ENCODE measurements at regions of chr2 and their contacts with region 1.

Region 1: GRCh38 chr2:160252278-160252887 is 52.3 kb upstream of the ITGB6 start:
- DNase-seq: peak; percentile 56 to 62
- ATAC-seq: peak; percentile 38 to 54; a peak in 3 of 6 replicates
- H3K4me3 ChIP-seq: peak overlapping the region; percentile 34; the same call in 1 of the 3 replicates
- H3K27ac ChIP-seq: peak overlapping the region; percentile 73 to 84
- H3K4me1 ChIP-seq: peaks cover 50% of the 10 kb centered on the region
- CTCF ChIP-seq: peak; percentile 78
- EP300 ChIP-seq: no peak
- POLR2A ChIP-seq: no peak
- RAD21 ChIP-seq: peak; percentile 66 to 71; a peak in 4 of 5 replicates

Region 2: GRCh38 chr2:160224060-160224459 is 28.3 kb before region 1 on chr2:
- CTCF ChIA-PET with region 1: interaction called, 15 read pairs
- POLR2A ChIA-PET with region 1: interaction called, 3 read pairs
- DNase-seq: peak; percentile 86 to 92
- ATAC-seq: peak; percentile 64 to 73
- H3K4me3 ChIP-seq: no peak overlapping the region
- H3K27ac ChIP-seq: peak overlapping the region; percentile 88 to 97
- H3K4me1 ChIP-seq: peaks cover 95% of the 10 kb centered on the region
- CTCF ChIP-seq: no peak
- EP300 ChIP-seq: peak; percentile 21 to 59; a peak in 2 of 5 replicates
- POLR2A ChIP-seq: no peak
- RAD21 ChIP-seq: peak; percentile 2 to 20; a peak in 2 of 5 replicates

Region 3: DNA sequence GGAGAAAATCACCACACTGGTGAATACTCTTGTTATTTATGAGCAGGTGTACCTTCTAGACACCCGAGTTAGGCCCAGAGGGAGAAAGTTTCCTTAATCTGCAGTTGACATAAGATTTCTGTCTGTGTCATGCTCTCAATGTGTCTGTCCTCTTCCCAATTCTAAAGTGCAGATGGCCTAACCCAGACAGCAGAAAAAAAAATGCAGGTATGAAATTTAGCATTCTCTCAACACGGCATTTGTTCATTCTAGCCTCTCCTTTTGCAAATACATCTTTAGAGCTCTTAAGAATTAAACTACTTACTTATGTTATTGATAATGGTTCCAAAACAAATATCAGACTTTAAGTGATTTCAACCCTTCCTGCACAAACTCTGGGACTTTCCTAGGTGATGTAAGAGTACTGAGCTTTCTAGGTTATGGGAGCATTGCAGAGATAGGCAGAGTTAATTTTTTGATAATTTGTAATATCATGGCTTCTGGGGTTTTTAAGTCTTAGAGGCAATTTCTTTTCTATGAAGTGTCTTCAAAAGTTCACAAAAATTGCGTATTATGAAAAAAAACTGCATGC is 19.4 kb before region 1 on chr2:
- CTCF ChIA-PET with region 1: interaction called, 15 read pairs
- POLR2A ChIA-PET with region 1: interaction called, 3 read pairs
- DNase-seq: no peak
- ATAC-seq: no peak; a peak in 1 of 6 replicates
- H3K4me3 ChIP-seq: no peak overlapping the region
- H3K27ac ChIP-seq: peak overlapping the region; percentile 88 to 97
- H3K4me1 ChIP-seq: peaks cover 56% of the 10 kb centered on the region
- CTCF ChIP-seq: no peak
- EP300 ChIP-seq: no peak
- POLR2A ChIP-seq: no peak
- RAD21 ChIP-seq: no peak

Region 4: GRCh38 chr2:160241251-160242137 is 10.9 kb before region 1 on chr2:
- CTCF ChIA-PET with region 1: interaction called, 20 read pairs
- POLR2A ChIA-PET with region 1: interaction called, 3 read pairs
- DNase-seq: peak; percentile 72 to 88
- ATAC-seq: peak; percentile 87 to 91
- H3K4me3 ChIP-seq: no peak overlapping the region
- H3K27ac ChIP-seq: peak overlapping the region; percentile 88 to 93
- H3K4me1 ChIP-seq: peaks cover 52% of the 10 kb centered on the region
- CTCF ChIP-seq: no peak
- EP300 ChIP-seq: peak; percentile 56 to 61; a peak in 2 of 5 replicates
- POLR2A ChIP-seq: no peak; the same call in 1 of the 2 replicates
- RAD21 ChIP-seq: peak in 1 of 2 experiments; percentile 31; a peak in 2 of 5 replicates

Region 5: DNA sequence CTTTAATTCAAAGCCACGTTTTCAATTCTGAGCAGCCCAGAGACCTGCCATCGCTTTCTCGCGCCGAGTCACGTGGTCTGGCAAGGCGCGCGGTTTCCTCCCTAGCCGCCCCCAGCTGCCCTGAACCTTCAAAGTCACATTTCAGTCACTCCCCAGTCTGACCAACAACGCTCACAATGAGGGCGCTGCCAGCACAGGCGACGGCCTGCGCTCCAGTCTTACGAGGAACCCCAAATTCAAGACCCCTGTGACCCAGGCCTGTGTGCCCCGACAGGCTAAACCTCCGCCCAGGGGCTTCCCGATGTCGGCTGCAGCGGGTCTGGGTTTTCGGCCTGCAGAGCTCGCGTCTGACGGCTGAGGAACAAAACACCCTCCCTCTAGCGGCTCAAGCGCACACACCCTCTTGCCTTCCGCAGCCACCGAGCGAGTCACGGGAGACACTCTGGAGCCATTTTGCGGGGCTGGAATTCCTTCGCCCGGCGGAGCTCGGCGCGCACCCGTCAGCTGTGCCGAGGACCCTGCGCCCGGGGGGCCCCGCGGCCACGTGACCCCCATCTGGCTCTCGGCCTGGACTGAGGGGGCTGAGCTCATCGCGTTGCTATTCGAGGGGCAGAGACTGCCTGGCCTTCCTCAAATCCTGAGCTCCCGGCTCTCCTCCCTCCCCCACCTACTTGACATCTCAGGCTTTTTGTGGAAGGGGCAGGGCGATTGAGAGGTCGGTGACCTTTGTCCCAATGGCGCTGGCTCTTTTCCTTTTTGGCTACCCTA is 17.6 kb after region 1 on chr2:
- CTCF ChIA-PET with region 1: interaction called, 65 read pairs
- POLR2A ChIA-PET with region 1: interaction called, 6 read pairs
- DNase-seq: peak; percentile 83 to 92
- ATAC-seq: peak; percentile 91
- H3K4me3 ChIP-seq: peak overlapping the region; percentile 39
- H3K27ac ChIP-seq: peak overlapping the region; percentile 94 to 96
- H3K4me1 ChIP-seq: peaks cover 74% of the 10 kb centered on the region
- CTCF ChIP-seq: peak; percentile 43
- EP300 ChIP-seq: peak in 1 of 2 experiments; percentile 51; a peak in 1 of 5 replicates
- POLR2A ChIP-seq: no peak
- RAD21 ChIP-seq: peak; percentile 44 to 73

Measured in A549 (cell line).